ENCODE measurements at regions of chr14 and their contacts with region 1.

Region 1: GRCh38 chr14:93543766-93544165 is 113.0 kb downstream of the UNC79 start:
- DNase-seq: no peak
- H3K4me3 ChIP-seq: no peak overlapping the region
- H3K27ac ChIP-seq: no peak overlapping the region
- H3K27me3 ChIP-seq: no peaks in the 10 kb centered on the region
- CTCF ChIP-seq: peak; percentile 19 to 77 (median 56)

Region 2: DNA sequence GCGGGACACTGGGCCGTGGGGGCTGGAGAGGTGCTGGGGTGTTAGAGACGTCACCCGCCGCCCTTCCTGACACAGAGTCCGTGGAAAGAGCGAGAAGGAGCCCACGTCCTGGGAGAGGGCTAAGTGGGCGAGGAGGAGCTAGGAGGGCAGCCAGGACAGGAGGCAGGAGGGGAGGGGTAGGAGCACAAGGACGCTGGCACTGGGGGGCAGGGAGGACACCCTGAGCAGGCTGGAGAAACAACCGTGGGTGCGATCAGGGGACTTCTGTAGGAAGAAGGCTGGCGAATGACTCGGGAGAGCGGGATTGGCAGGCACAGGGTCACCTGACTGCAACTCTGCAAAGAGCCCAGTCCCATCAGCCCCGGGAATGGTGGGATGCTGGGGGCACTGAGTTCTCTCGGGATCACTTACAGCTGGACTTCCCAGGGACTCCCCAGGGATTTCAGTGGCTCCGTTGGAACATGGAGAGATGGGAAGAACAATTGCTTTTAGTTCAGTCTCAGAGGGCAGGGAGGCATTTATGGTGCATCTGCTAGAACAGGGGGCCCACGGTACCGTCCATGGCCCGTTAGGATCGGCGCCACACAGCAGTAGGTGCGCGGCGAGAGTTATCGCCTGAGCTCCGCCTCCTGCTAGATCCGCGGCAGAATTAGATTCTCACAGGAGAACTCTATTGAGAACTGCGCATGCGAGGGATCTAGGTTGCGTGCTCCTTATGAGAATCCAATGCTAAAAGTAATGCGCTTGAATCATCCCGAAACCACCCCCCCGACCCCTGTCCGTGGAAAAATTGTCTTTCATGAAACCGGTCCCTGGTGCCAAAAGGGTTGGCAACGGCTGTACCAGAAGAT is 312.4 kb before region 1 on chr14:
- intact Hi-C with region 1: loop called in 1 of 2 experiments (anchors 10 kb)
- DNase-seq: peak in 9 of 10 donors; percentile 32 to 87 (median 74)
- H3K4me3 ChIP-seq: peak overlapping the region; percentile 22 to 80 (median 56)
- H3K27ac ChIP-seq: peak overlapping the region in 32 of 59 donors; percentile 4 to 81 (median 48)
- H3K27me3 ChIP-seq: no peaks in the 10 kb centered on the region
- CTCF ChIP-seq: no peak

Region 3: GRCh38 chr14:93566065-93566693 is 22.4 kb after region 1 on chr14:
- intact Hi-C with region 1: no loop called
- DNase-seq: no peak
- H3K4me3 ChIP-seq: no peak overlapping the region
- H3K27ac ChIP-seq: no peak overlapping the region
- H3K27me3 ChIP-seq: no peaks in the 10 kb centered on the region
- CTCF ChIP-seq: no peak